Sigmoid colon (tissue), 7 donors: ENCODE measurements at regions of chr2 and their contacts with region 1.

Region 1: GRCh38 chr2:9142551-9143263 is 63.9 kb upstream of the ASAP2 start:
- DNase-seq: peak; percentile 95
- H3K4me3 ChIP-seq: peak overlapping the region in 3 of 4 donors; percentile 27 to 34 (median 28)
- H3K27ac ChIP-seq: peak overlapping the region; percentile 51 to 78 (median 66)
- H3K4me1 ChIP-seq: peaks cover 0 to 21% (median 18%) of the 10 kb centered on the region in 4 donors
- H3K27me3 ChIP-seq: no peaks in the 10 kb centered on the region
- CTCF ChIP-seq: peak; percentile 97 to 99 (median 98)
- EP300 ChIP-seq: no peak
- POLR2A ChIP-seq: no peak

Region 2: GRCh38 chr2:8872821-8873432 is 269.8 kb before region 1 on chr2:
- intact Hi-C with region 1: loop called (anchors 2 kb)
- DNase-seq: no peak
- H3K4me3 ChIP-seq: no peak overlapping the region
- H3K27ac ChIP-seq: no peak overlapping the region
- H3K4me1 ChIP-seq: no peaks in the 10 kb centered on the region
- H3K27me3 ChIP-seq: no peaks in the 10 kb centered on the region
- CTCF ChIP-seq: peak in 3 of 4 experiments; percentile 18 to 53 (median 43)
- EP300 ChIP-seq: no peak
- POLR2A ChIP-seq: no peak

Region 3: DNA sequence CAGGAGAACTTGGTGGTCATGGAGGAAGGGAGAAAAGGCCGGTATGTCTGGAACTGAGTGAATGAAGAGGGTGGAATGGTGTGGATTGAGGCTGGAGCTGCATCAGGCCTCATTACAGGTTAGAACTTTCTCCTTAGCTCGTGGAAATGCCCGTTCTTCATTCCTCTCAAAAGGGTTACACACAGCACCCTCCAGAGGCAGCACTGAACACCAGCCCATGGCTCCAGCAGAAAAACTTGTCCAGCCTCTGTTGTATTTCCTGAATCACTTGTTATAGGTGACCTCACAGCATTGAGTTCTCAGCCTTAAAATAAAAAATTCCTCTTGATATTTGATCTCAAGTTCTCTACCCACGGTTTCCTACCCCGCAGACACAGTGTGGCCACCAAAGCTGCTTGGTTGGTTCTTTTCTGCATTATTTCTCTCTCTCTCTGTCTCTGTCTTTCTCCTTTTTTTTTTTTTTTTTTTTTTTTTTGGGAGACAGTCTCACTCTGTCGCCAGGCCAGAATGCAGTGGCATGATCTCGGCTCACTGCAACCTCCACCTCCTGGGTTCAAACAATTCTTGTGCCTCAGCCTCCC is 191.0 kb after region 1 on chr2:
- intact Hi-C with region 1: loop called (anchors 1 kb)
- DNase-seq: peak; percentile 81
- H3K4me3 ChIP-seq: no peak overlapping the region
- H3K27ac ChIP-seq: peak overlapping the region in 3 of 4 donors; percentile 18 to 73 (median 60)
- H3K4me1 ChIP-seq: peaks cover 0 to 38% (median 14%) of the 10 kb centered on the region in 4 donors
- H3K27me3 ChIP-seq: no peaks in the 10 kb centered on the region
- CTCF ChIP-seq: peak; percentile 52 to 85 (median 67)
- EP300 ChIP-seq: no peak
- POLR2A ChIP-seq: no peak

Region 4: DNA sequence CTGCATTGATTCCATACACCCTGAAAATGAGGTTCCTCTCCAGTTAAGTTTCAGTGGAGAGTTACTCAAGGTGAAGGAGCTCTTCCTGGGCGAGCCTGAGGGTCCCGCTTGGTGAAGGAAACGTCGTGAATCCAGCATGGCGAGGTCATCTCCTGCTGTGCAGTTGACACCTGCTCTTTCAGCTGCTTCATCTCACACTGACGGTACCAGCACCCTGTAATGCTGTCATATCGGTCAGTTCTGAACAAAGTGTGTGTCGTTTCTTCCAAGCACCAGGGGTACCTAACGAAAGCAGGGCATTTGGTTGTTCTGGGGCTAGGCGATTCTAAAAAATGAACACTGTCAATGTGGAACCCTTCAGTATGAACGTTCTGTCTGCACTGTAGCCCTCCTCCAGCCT is 228.0 kb after region 1 on chr2:
- intact Hi-C with region 1: loop called (anchors 2 kb)
- DNase-seq: no peak
- H3K4me3 ChIP-seq: no peak overlapping the region
- H3K27ac ChIP-seq: no peak overlapping the region
- H3K4me1 ChIP-seq: no peaks in the 10 kb centered on the region
- H3K27me3 ChIP-seq: no peaks in the 10 kb centered on the region
- CTCF ChIP-seq: no peak
- EP300 ChIP-seq: no peak
- POLR2A ChIP-seq: no peak

Region 5: DNA sequence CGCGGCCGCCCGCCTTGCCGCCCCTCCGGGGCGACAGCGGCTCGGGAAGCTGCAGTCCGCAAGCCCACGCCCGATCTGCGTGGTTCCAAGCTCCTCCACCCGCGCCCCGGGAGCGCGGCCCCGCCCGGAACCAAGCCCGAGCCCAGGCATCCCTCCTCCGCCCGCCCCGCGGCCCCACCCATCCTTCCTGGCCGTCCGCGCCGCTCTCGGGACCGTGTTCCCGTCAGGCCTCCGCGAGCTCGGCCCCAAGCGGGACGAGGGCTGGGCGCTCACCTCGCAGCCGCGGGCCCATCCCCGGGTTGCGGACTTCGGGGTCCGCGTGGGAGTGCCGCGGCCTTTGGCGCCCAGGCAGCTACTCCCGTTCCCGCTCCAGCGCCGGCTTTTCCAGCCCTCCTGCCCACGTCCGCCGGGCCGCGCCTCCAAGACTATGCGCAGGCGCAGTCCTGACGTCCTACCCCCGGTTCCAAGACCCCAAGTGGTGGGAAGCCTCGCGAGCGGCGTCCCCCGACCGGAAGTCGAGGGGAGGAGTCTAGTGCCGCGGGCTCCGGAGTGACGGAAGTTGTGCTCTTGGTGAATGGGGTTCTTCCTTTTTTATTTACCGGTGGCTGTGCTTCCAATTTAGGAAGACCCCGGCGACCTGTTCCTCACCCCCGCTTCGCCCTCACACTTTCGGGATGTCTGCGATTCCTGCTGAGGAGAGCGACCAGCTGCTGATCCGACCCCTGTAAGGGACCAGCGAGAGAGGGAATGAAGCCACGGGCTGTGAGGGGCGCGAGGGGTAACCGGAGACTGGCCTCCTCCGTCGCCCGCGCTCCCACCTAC is 280.6 kb after region 1 on chr2 and contains the starts of genes CPSF3 and ITGB1BP1:
- intact Hi-C with region 1: loop called (anchors 2 kb)
- DNase-seq: peak; percentile 99
- H3K4me3 ChIP-seq: peak within 1 kb of the TSS; percentile 84 to 99 (median 93)
- H3K27ac ChIP-seq: peak within 1 kb of the TSS; percentile 94 to 97 (median 96)
- H3K4me1 ChIP-seq: peaks cover 0 to 38% (median 33%) of the 10 kb centered on the region in 4 donors
- H3K27me3 ChIP-seq: no peaks in the 10 kb centered on the region
- CTCF ChIP-seq: peak in 1 of 4 experiments; percentile 31
- EP300 ChIP-seq: peak in 1 of 4 donors; percentile 69
- POLR2A ChIP-seq: no peak
- total RNA-seq, gene CPSF3: 22.9 to 33.5 (median 27.5) TPM
- total RNA-seq, gene ITGB1BP1: 52.3 to 75.6 (median 61.6) TPM